Activated CD4-positive, alpha-beta T cell treated with anti-CD3 and anti-CD28 coated beads, Interleukin-2, amount 10 ng/mL, durations not matched to agents 24 days and 14 days (primary cell): ENCODE measurements at regions of chr4 and their contacts with region 1.

Region 1: GRCh38 chr4:3074078-3074795 is at the starts of genes HTT and HTT-AS:
- DNase-seq: peak; percentile 97
- H3K4me3 Mint-ChIP-seq: peak within 1 kb of the TSS; percentile 96
- H3K27ac Mint-ChIP-seq: peak within 1 kb of the TSS; percentile 91
- H3K4me1 Mint-ChIP-seq: peaks cover 19% of the 10 kb centered on the region
- H3K27me3 Mint-ChIP-seq: no peaks in the 10 kb centered on the region
- total RNA-seq, gene HTT: 67.4 and 70.6 TPM in 2 replicates
- total RNA-seq, gene HTT-AS: not detected in 2 replicates

Region 2: GRCh38 chr4:1346781-1347409 is 1727.3 kb before region 1 on chr4 and contains the start of gene UVSSA:
- intact Hi-C with region 1: loop called (anchors 5 kb)
- DNase-seq: peak; percentile 100
- H3K4me3 Mint-ChIP-seq: peak within 1 kb of the TSS; percentile 98
- H3K27ac Mint-ChIP-seq: peak within 1 kb of the TSS; percentile 94
- H3K4me1 Mint-ChIP-seq: peaks cover 35% of the 10 kb centered on the region
- H3K27me3 Mint-ChIP-seq: no peaks in the 10 kb centered on the region
- total RNA-seq, gene UVSSA: 28.3 and 28.4 TPM in 2 replicates

Region 3: DNA sequence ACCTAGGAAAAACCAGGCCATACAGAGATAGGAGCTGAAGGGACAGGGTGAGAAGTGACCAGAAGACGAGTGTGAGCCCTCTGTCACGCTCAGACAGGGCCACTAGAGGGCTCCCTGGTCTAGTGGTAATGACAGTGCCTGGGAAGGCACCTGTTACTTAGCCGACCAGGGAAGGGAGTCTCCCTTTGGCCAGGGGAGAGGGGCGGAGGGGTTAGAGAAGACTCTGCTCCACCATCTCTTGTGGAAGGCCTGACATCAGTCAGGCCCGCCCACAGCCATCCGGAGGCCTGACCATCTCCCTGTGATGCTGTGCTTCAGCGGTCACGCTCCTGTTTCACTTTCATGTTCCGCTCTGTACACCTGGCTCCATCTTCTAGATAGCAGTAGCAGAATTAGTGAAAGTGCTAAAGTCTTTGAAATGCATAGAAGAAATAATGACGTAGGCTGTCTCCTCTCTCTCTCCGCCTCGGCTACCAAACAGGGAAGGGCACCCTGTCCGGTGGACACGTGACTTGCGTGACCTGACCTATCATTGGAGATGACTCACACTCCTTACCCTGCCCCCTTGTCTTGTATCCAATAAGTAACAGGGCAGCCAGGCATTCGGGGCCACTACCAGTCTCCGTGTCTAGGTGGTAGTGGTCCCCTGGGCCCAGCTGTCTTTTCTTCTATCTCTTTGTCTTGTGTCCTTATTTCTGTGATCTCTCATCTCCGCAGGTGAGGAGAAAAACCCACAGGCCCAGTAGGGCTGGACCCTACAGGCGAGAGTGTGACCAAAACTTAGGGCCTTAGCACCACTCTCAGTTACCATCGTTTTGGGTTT is 26.6 kb before region 1 on chr4:
- intact Hi-C with region 1: loop called (anchors 1 kb)
- DNase-seq: peak; percentile 95
- H3K4me3 Mint-ChIP-seq: peak overlapping the region; percentile 60
- H3K27ac Mint-ChIP-seq: peak overlapping the region; percentile 68
- H3K4me1 Mint-ChIP-seq: peaks cover 38% of the 10 kb centered on the region
- H3K27me3 Mint-ChIP-seq: peaks cover 10% of the 10 kb centered on the region

Region 4: DNA sequence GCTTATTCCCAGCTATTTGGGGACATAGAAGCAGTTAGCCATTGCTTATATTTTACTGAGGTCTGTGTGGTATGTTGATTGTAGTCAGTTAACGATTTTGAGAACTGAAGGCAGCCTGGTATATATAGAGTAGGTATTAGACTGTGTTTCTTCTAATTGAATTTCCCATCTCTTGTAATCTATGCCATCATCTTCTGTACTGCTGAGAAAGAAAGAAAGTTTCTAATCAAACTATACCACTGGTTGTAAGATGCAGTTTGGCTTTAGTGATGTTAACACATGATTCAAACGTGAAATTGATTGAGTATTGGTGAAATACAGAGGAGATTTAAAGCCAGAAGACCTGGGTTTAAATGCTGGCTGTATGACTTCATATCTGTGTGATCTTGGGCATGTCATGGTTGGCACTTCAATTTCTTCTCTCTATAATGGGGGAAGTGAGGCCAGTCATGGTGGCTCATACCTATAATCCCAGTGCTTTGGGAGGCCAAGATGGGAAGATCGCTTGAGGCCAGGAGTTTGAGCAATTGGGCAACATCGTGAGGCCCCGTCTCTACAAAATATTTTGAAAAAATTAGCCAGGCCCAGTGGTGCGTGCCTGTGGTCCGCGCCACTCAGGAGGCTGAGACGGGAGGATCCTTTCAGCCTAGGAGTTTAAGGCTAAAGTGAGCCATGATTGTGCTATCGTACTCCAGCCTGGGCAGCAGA is 11.9 kb after region 1 on chr4:
- intact Hi-C with region 1: loop called (anchors 1 kb)
- DNase-seq: no peak
- H3K4me3 Mint-ChIP-seq: no peak overlapping the region
- H3K27ac Mint-ChIP-seq: peak overlapping the region; percentile 70
- H3K4me1 Mint-ChIP-seq: peaks cover 44% of the 10 kb centered on the region
- H3K27me3 Mint-ChIP-seq: no peaks in the 10 kb centered on the region

Region 5: GRCh38 chr4:3145234-3145924 is 71.1 kb after region 1 on chr4:
- intact Hi-C with region 1: no loop called
- DNase-seq: no peak
- H3K4me3 Mint-ChIP-seq: no peak overlapping the region
- H3K27ac Mint-ChIP-seq: no peak overlapping the region
- H3K4me1 Mint-ChIP-seq: no peaks in the 10 kb centered on the region
- H3K27me3 Mint-ChIP-seq: no peaks in the 10 kb centered on the region

Region 6: DNA sequence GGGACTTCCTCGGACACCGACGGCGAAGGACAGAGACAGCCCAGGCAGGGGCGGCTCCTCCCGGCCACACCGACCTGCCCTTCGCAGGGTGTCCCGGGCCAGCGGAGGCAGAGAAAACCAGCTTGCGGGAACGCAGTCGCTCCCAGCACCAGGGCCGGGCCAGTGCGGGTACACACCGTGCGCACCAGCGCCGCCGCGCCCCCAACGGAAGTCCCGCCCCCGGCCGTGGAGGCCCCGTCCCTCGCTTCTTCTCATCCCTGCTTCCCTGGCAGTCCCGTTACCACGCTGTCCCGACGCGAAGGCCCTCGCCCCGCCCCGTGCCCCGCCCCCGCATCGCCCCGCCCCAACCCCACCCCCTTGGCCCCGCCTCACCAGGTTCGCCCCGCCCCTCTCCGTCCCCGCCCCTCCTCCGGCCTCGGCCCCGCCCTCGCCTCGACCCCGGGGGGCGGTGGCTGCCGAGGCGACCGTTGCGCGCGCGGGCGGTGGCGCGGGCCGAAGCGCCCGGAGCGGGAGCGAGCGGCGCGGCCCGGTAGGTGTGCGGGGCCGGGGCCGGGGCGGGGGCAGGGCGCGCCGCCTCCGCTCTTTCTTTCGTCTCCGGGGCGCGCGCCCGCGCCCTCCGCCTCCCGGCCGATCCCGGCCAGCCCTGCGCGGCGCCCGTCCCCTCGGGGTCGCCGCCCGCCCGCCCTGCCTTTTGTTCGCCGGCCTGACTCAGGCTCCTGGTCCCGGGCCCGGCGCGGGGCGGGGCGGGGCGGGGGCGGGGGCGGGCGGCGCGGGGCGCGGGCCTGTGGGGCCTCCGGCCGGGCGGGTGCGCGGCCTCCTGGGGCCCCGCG is 218.5 kb after region 1 on chr4 and contains the start of gene RGS12:
- intact Hi-C with region 1: loop called (anchors 1 kb)
- DNase-seq: peak; percentile 95
- H3K4me3 Mint-ChIP-seq: peak within 1 kb of the TSS; percentile 91
- H3K27ac Mint-ChIP-seq: peak within 1 kb of the TSS; percentile 77
- H3K4me1 Mint-ChIP-seq: peaks cover 13% of the 10 kb centered on the region
- H3K27me3 Mint-ChIP-seq: peaks cover 64% of the 10 kb centered on the region
- total RNA-seq, gene RGS12: 3.3 and 3.7 TPM in 2 replicates